ENCODE measurements at regions of chr21 and their contacts with region 1.

Region 1: GRCh38 chr21:38355992-38356797 is 99.4 kb downstream of the KCNJ15 start:
- DNase-seq: peak; percentile 49 to 83 (median 68)
- ATAC-seq: peak; percentile 76
- H3K4me3 ChIP-seq: no peak overlapping the region
- H3K4me3 Mint-ChIP-seq: no peak overlapping the region
- H3K27ac ChIP-seq: no peak overlapping the region
- H3K27ac Mint-ChIP-seq: no peak overlapping the region
- H3K4me1 ChIP-seq: peaks cover 12% of the 10 kb centered on the region
- H3K4me1 Mint-ChIP-seq: peaks cover 14% of the 10 kb centered on the region
- H3K27me3 ChIP-seq: no peaks in the 10 kb centered on the region
- H3K27me3 Mint-ChIP-seq: peaks cover 6% of the 10 kb centered on the region
- CTCF ChIP-seq: peak; percentile 85

Region 2: DNA sequence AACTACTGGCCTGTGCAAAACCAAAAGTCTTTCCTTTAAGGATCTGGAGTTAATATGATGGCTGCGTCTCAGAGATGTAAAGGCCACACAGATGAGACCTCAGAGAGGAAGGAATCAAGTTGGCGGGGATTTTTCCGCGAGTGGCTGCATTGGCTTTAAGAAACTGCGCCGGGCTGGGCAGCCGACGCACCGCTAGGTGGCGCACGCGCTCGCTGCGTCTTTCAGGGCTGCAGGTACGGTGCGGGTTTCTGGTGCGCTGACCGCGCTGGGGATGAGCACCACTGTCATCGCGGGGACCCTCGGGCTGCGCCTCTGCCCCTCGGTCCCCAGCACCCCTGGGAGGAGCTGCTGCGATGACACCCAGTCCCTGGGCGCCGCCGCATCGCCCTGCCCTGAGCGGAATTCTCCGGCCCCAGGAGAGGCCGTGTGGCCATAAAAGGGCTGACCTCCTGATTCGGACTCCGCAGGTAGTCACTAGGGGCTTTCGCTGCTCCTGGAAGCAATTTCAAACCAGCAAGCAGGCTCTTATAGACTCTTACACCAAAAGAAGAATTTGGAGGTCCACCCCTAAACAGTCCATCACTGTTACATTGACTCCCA is 680.9 kb before region 1 on chr21:
- CTCF ChIA-PET with region 1: no interaction called
- POLR2A ChIA-PET with region 1: no interaction called
- intact Hi-C with region 1: loop called in 1 of 2 experiments (anchors 1 kb)
- DNase-seq: peak; percentile 22 to 73 (median 41)
- ATAC-seq: peak; percentile 56
- H3K4me3 ChIP-seq: no peak overlapping the region
- H3K4me3 Mint-ChIP-seq: no peak overlapping the region
- H3K27ac ChIP-seq: no peak overlapping the region
- H3K27ac Mint-ChIP-seq: no peak overlapping the region
- H3K4me1 ChIP-seq: peaks cover 7% of the 10 kb centered on the region
- H3K4me1 Mint-ChIP-seq: no peaks in the 10 kb centered on the region
- H3K27me3 ChIP-seq: peaks cover 15 to 16% of the 10 kb centered on the region in 2 experiments
- H3K27me3 Mint-ChIP-seq: peaks cover 47% of the 10 kb centered on the region
- CTCF ChIP-seq: peak; percentile 86

Region 3: DNA sequence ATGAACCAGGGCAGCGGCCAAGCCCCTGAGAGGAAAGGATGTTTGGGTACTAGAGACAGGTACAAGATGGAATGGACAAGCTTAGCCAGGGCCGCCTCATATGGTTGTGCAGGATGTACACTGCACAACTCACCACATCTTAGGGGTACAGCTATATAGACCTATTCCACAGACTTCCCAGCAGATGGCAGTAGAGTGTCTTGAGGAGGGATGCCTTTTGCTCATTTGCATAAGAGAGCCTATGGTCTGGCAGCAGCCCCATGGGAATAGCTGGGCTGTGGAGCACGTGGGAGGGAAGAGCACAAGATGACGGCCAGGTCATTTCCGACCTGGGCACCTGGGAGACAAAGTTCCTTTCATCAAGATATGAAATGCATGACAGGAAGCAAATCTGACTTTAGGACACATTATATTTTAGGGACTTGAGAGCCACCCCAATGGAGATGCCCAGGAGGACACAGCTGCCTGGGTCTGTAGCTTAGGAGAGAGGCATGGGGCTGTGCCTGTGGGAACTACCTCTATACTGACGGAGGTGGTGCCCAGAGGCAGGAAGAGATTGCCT is 655.5 kb before region 1 on chr21:
- CTCF ChIA-PET with region 1: no interaction called
- POLR2A ChIA-PET with region 1: no interaction called
- intact Hi-C with region 1: loop called in 1 of 2 experiments (anchors 5 kb)
- DNase-seq: peak in 3 of 14 experiments; percentile 19 to 46 (median 44)
- ATAC-seq: no peak
- H3K4me3 ChIP-seq: no peak overlapping the region
- H3K4me3 Mint-ChIP-seq: no peak overlapping the region
- H3K27ac ChIP-seq: no peak overlapping the region
- H3K27ac Mint-ChIP-seq: no peak overlapping the region
- H3K4me1 ChIP-seq: no peaks in the 10 kb centered on the region
- H3K4me1 Mint-ChIP-seq: no peaks in the 10 kb centered on the region
- H3K27me3 ChIP-seq: peaks cover 0 to 5% of the 10 kb centered on the region in 2 experiments
- H3K27me3 Mint-ChIP-seq: peaks cover 25% of the 10 kb centered on the region
- CTCF ChIP-seq: peak; percentile 29

Region 4: DNA sequence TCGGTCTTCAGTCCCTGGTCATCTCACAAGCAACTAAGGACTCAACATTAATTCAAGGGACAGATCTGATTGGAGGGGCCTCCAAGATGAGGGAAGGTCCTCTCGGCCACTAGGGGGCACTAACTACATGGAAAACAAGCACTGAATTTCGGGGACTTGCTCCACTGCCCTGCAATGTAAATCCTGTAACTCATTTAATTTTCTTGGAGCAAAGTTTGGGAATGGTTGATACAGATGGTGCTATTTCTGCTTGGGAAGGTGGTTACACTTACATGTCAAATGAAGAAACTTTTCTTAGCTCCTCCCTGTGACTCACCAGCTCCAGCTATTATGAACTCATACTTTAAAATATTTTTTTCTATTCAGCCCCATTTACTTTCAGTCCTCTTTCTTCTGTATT is 196.8 kb before region 1 on chr21:
- CTCF ChIA-PET with region 1: interaction called, 8 read pairs
- POLR2A ChIA-PET with region 1: interaction called, 3 read pairs
- intact Hi-C with region 1: loop called (anchors 1 kb)
- DNase-seq: peak; percentile 32 to 75 (median 46)
- ATAC-seq: peak; percentile 44
- H3K4me3 ChIP-seq: no peak overlapping the region
- H3K4me3 Mint-ChIP-seq: no peak overlapping the region
- H3K27ac ChIP-seq: no peak overlapping the region
- H3K27ac Mint-ChIP-seq: no peak overlapping the region
- H3K4me1 ChIP-seq: no peaks in the 10 kb centered on the region
- H3K4me1 Mint-ChIP-seq: no peaks in the 10 kb centered on the region
- H3K27me3 ChIP-seq: peaks cover 0 to 5% of the 10 kb centered on the region in 2 experiments
- H3K27me3 Mint-ChIP-seq: peaks cover 43% of the 10 kb centered on the region
- CTCF ChIP-seq: peak; percentile 77

Region 5: GRCh38 chr21:38219049-38219628 is 137.1 kb before region 1 on chr21:
- CTCF ChIA-PET with region 1: interaction called, 8 read pairs
- POLR2A ChIA-PET with region 1: interaction called, 3 read pairs
- intact Hi-C with region 1: loop called (anchors 1 kb)
- DNase-seq: peak; percentile 29 to 83 (median 54)
- ATAC-seq: peak; percentile 67
- H3K4me3 ChIP-seq: no peak overlapping the region
- H3K4me3 Mint-ChIP-seq: no peak overlapping the region
- H3K27ac ChIP-seq: no peak overlapping the region
- H3K27ac Mint-ChIP-seq: no peak overlapping the region
- H3K4me1 ChIP-seq: peaks cover 3% of the 10 kb centered on the region
- H3K4me1 Mint-ChIP-seq: no peaks in the 10 kb centered on the region
- H3K27me3 ChIP-seq: no peaks in the 10 kb centered on the region
- H3K27me3 Mint-ChIP-seq: no peaks in the 10 kb centered on the region
- CTCF ChIP-seq: peak; percentile 96

Measured in CD4-positive, alpha-beta T cell (primary cell).